ENCODE measurements at regions of chr5 and their contacts with region 1.

Region 1: DNA sequence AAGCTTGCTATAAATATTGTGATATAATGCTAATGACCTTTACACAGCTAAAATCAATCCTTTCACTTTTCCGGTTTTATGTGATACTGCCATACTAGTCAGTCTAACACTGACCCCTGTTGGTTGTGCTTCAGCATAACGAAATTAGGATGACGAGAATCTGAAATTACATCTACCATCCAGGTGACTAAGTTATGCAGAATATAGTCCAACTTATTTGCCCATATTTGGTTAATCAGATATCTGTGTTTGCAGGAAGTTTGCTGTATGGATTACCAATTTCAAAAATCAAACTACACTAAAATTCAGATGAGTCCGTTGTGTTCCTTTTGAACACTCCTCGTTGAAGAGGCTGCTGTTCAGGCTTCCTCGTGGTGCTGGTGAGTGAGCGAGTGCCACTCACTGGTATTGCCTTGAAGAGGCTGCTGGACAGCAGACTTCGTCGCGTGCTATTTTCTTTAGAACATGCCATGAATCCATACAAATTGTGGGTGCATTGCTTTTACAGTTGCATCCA is 32.5 kb downstream of the TENT4A start:
- DNase-seq: peak; percentile 57

Region 2: DNA sequence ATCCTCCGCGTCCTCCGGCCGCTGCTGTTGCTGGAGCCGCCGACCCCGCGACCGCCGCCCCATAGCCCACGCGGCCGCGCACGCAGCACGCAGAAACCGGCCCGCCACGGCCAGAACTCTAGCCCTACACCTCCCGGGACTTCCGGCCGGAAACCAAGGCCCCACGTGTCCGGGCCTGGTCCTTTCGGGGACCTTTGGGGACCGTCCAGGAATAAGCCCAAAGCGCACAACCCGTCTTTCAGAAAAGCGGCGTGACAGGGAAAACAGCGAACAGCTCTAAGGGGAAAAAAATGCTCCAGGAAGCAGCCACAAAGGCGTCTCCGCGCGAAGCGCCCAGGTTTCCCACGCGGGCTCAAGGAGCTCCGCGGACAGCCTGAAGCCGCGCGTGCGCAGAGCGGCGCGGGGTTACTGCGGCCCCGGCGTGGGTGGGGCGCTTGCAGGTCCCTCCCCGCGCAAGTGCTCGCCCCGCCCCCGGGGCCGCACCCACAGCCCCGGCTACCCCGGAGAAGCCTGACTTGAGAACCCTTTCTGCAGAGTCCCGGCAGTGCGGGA is 112.8 kb before region 1 on chr5 and contains the starts of genes NSUN2 and SRD5A1:
- in situ Hi-C with region 1: loop called (anchors 25 kb)
- DNase-seq: peak; percentile 85

Region 3: GRCh38 chr5:6937675-6938074 is 191.9 kb after region 1 on chr5:
- in situ Hi-C with region 1: no loop called
- DNase-seq: no peak